ENCODE measurements at regions of chr9 and their contacts with region 1.

Region 1: DNA sequence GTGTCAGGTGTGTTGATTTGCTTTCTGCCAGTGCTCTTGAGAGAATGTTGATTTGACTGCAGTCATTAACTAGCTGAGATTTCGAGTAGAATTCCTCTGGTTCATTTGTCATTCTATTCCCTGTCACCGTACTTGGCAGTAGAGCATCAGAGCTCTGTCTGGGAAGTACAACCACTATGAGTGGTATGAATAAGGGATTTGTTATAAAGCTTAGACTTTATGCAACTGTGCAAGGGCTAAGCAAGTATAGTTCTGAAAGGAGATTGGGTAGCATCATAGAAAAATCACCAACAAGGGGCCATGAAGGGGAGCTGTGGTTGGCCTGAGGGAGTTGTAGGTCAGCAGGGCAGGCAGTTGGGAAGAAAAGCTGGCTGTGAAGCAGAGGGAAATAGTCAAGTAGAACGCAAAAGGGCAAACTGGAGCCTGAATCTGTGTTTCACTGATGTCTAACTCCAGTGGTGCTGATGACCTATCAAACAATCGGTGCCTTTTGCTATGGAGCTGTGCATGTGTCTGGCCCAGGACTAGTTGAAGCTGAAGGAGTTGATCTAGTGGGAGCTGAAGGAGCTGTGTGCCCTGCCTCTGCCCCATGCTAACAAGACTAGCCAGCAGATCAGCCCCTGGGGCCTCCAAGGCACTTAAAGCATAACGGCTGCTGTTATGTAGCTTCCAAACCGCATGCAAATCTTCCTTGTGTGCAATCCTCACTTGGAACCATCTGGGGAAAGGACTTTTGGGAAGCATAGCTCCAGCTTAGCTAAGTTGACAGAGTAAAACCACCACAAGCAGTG is 110.0 kb downstream of the SLC28A3 start:
- DNase-seq: no peak
- H3K4me3 ChIP-seq: no peak overlapping the region
- H3K27ac ChIP-seq: no peak overlapping the region
- H3K4me1 ChIP-seq: peaks cover 0 to 11% (median 6%) of the 10 kb centered on the region in 4 experiments; a peak in 5 of 7 replicates
- H3K27me3 ChIP-seq: no peaks in the 10 kb centered on the region
- CTCF ChIP-seq: no peak
- EP300 ChIP-seq: no peak
- POLR2A ChIP-seq: no peak
- RAD21 ChIP-seq: no peak

Region 2: DNA sequence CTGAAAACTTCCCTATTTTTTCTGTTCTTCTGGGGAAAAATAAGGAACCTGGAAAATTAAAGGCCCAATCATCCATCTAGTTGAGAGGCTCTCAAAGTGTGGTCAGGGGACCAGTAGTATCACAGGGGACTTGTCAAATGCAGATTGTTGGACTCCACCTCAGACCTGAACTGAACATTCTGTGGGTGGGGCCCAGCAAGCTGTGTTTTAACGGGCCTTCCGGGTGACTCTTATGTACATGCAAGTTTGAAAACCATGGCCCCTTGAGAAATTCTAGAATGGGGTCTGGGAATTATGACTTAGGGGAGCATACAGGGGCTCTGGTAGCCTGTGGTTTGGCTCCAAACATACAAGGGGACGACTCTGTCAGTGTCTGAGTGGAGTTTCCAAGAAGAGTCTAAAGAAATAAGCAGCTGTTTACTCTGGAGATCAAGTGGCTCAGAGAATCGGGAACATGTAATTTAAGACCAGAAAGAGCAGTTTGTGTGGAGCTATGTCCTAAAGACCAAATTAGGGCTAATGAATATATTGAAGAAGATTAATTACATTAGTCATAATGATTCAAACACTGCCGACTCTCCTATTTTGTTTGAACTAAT is 67.4 kb before region 1 on chr9:
- CTCF ChIA-PET with region 1: no interaction called
- POLR2A ChIA-PET with region 1: no interaction called
- DNase-seq: no peak
- H3K4me3 ChIP-seq: no peak overlapping the region
- H3K27ac ChIP-seq: no peak overlapping the region
- H3K4me1 ChIP-seq: no peaks in the 10 kb centered on the region
- H3K27me3 ChIP-seq: no peaks in the 10 kb centered on the region
- CTCF ChIP-seq: no peak
- EP300 ChIP-seq: no peak
- POLR2A ChIP-seq: no peak
- RAD21 ChIP-seq: no peak

Region 3: GRCh38 chr9:84244850-84245249 is 14.3 kb after region 1 on chr9:
- CTCF ChIA-PET with region 1: interaction called, 10 read pairs
- POLR2A ChIA-PET with region 1: no interaction called
- DNase-seq: no peak
- H3K4me3 ChIP-seq: no peak overlapping the region
- H3K27ac ChIP-seq: no peak overlapping the region
- H3K4me1 ChIP-seq: no peaks in the 10 kb centered on the region
- H3K27me3 ChIP-seq: no peaks in the 10 kb centered on the region
- CTCF ChIP-seq: no peak
- EP300 ChIP-seq: no peak
- POLR2A ChIP-seq: no peak
- RAD21 ChIP-seq: no peak

Measured in H1 (cell line).